ENCODE measurements at regions of chr12 and their contacts with region 1.

Region 1: GRCh38 chr12:94149119-94149780 is 873 bp downstream of the PLXNC1 start:
- DNase-seq: peak; percentile 71
- ATAC-seq: peak; percentile 29
- H3K4me3 Mint-ChIP-seq: peak overlapping the region; percentile 96
- H3K27ac Mint-ChIP-seq: peak overlapping the region; percentile 70
- H3K4me1 Mint-ChIP-seq: peaks cover 58% of the 10 kb centered on the region
- H3K27me3 Mint-ChIP-seq: no peaks in the 10 kb centered on the region
- CTCF ChIP-seq: no peak

Region 2: DNA sequence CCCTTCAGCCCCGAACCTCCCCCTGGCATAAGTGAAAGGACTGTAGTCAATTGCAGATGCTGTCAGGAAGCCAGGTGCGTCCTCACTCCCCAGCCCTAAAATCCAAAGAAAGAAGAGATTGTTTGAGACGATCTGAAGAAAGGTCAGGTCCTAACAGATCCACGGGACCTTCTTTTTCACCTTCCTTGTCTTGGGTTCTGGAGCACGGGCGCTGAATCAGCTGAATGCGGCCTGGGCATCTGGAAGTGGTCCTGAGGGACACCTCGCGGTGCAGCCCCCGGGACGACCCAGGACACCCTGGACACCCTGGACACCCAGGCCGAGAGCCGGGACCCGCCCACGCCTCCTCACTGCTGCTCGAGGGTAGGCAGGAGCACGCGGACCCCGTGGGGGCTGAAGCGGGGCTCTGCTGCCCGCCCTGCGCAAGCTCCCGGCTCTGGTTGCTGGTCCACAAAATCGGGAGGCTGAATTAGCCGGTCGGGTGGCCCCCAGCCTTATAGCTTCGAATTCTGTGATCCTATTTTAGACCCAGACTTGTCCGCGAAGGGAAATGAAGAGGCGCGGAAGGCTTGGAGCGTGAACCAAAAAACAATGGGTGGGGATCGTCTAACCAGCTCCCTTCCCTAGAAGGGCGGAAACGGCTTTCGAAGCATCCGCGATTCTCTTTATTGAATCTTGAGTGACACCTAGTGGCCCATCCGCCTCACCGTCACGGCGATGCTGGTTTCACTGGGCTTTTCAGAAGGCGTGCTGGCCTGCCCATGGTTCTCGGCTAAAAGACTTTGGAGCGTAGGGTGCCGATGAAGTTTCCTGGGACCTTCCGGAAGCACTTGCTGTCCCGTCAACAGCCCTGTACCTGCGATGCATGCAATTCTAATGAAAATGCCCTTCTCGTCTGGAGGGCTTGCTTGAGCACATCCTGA is 47.3 kb before region 1 on chr12:
- CTCF ChIA-PET with region 1: no interaction called
- POLR2A ChIA-PET with region 1: no interaction called
- intact Hi-C with region 1: no loop called
- DNase-seq: peak; percentile 64
- ATAC-seq: peak; percentile 87
- H3K4me3 Mint-ChIP-seq: peak overlapping the region; percentile 83
- H3K27ac Mint-ChIP-seq: no peak overlapping the region
- H3K4me1 Mint-ChIP-seq: peaks cover 6% of the 10 kb centered on the region
- H3K27me3 Mint-ChIP-seq: peaks cover 54% of the 10 kb centered on the region
- CTCF ChIP-seq: peak; percentile 34

Region 3: DNA sequence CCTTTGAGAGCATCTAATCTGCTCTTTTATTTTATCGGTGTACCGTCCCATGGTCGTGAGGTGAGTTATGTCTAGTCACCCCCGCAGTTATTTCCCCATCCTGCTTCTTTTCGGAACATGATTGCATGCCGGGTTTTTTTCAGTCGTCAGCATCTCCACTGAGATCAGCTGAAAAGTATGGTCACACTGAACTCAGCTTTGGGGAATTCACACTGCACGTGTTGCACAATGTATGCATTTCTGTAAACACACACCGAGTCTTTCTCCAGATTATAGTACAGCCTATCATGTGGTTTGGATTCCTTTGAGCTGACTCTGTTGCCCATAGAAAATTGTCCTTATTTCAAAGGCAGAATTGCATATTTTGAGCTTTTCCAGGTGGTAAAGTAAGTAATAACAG is 23.7 kb after region 1 on chr12:
- CTCF ChIA-PET with region 1: interaction called, 4 read pairs
- POLR2A ChIA-PET with region 1: interaction called, 8 read pairs
- intact Hi-C with region 1: loop called (anchors 1 kb)
- DNase-seq: no peak
- ATAC-seq: no peak
- H3K4me3 Mint-ChIP-seq: no peak overlapping the region
- H3K27ac Mint-ChIP-seq: peak overlapping the region; percentile 30
- H3K4me1 Mint-ChIP-seq: peaks cover 43% of the 10 kb centered on the region
- H3K27me3 Mint-ChIP-seq: no peaks in the 10 kb centered on the region
- CTCF ChIP-seq: no peak

Region 4: GRCh38 chr12:94262228-94263010 is 113.2 kb after region 1 on chr12:
- CTCF ChIA-PET with region 1: interaction called, 3 read pairs
- POLR2A ChIA-PET with region 1: interaction called, 11 read pairs
- intact Hi-C with region 1: loop called (anchors 1 kb)
- DNase-seq: peak; percentile 63
- ATAC-seq: peak; percentile 82
- H3K4me3 Mint-ChIP-seq: peak overlapping the region; percentile 97
- H3K27ac Mint-ChIP-seq: peak overlapping the region; percentile 99
- H3K4me1 Mint-ChIP-seq: peaks cover 64% of the 10 kb centered on the region
- H3K27me3 Mint-ChIP-seq: no peaks in the 10 kb centered on the region
- CTCF ChIP-seq: no peak

Region 5: DNA sequence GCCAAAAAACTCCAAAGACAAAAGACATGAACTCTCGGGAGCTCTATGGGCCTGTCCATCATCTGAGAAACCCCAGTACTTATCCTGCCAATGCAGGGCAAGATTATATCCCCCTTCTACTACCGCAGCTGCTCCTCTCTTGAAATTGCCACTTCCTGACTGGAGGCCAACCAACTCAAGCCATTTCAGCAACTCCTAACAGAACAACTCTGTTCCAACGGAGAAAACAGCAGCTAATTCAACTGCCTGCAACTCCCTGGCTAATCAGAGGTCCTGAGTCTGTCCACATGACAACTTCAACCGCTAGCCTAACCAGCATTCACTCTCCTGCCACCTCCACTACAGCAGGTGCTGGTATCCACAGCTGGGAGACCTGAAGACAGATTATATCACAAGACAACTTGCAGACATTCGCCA is 286.3 kb after region 1 on chr12:
- CTCF ChIA-PET with region 1: interaction called, 23 read pairs
- POLR2A ChIA-PET with region 1: no interaction called
- intact Hi-C with region 1: loop called (anchors 1 kb)
- DNase-seq: no peak
- ATAC-seq: no peak
- H3K4me3 Mint-ChIP-seq: no peak overlapping the region
- H3K27ac Mint-ChIP-seq: no peak overlapping the region
- H3K4me1 Mint-ChIP-seq: peaks cover 12% of the 10 kb centered on the region
- H3K27me3 Mint-ChIP-seq: no peaks in the 10 kb centered on the region
- CTCF ChIP-seq: no peak

Region 6: DNA sequence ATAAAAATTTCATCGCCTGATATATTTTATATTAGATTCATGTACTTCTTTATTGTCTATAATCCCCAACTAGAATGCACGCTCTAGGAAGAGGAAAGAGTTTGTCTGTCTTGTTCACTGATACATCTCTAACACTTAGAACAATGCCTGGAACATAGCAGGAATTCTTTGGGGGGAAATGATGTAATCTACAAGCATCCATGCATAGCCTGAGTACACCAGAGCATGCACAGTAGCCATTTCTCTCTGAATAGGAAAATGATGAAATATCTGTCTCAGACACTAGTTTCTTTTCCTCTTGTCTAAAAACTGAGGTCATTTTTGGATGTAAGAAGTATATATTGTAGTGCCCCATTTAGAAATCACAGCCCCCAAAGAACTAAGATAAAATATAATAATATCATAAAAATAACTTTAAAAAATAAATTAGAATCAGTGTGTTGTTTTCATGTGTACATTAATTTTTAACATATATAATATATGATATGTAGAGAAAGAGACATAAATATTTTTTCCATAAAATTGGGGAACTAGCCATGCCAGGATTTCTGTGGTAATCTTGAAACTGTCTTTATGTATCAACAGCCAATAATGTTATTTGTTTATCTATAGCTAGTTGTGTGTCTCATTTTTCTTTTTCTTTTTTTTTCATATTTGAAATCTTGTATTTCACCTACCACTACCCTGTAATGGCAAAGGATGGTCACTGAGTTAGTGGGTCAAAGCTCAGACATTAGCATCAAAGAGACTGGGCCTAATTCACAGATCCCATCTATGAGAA is 656.7 kb after region 1 on chr12:
- CTCF ChIA-PET with region 1: no interaction called
- POLR2A ChIA-PET with region 1: interaction called, 10 read pairs
- intact Hi-C with region 1: no loop called
- DNase-seq: no peak
- ATAC-seq: peak; percentile 92
- H3K4me3 Mint-ChIP-seq: peak overlapping the region; percentile 21
- H3K27ac Mint-ChIP-seq: peak overlapping the region; percentile 77
- H3K4me1 Mint-ChIP-seq: peaks cover 57% of the 10 kb centered on the region
- H3K27me3 Mint-ChIP-seq: no peaks in the 10 kb centered on the region
- CTCF ChIP-seq: no peak